ENCODE measurements at regions of chr1 and their contacts with region 1.

Region 1: GRCh38 chr1:22025368-22026155 is 24.1 kb downstream of the CELA3A start:
- DNase-seq: peak; percentile 80 to 94 (median 88)
- H3K4me3 ChIP-seq: peak overlapping the region; percentile 96
- H3K4me3 Mint-ChIP-seq: peak overlapping the region; percentile 86 to 98 (median 93)
- H3K27ac ChIP-seq: peak overlapping the region; percentile 99
- H3K27ac Mint-ChIP-seq: peak overlapping the region; percentile 93 to 100 (median 98)
- H3K4me1 ChIP-seq: peaks cover 31% of the 10 kb centered on the region
- H3K4me1 Mint-ChIP-seq: peaks cover 31 to 51% (median 50%) of the 10 kb centered on the region in 3 donors
- H3K27me3 ChIP-seq: no peaks in the 10 kb centered on the region
- H3K27me3 Mint-ChIP-seq: no peaks in the 10 kb centered on the region

Region 2: GRCh38 chr1:21782868-21783678 is 242.5 kb before region 1 on chr1 and contains the start of gene USP48:
- CTCF ChIA-PET with region 1: interaction called, 3 read pairs
- POLR2A ChIA-PET with region 1: interaction called, 12 read pairs
- DNase-seq: peak; percentile 94 to 98 (median 97)
- H3K4me3 ChIP-seq: peak within 1 kb of the TSS; percentile 99
- H3K4me3 Mint-ChIP-seq: peak within 1 kb of the TSS; percentile 91 to 99 (median 98)
- H3K27ac ChIP-seq: peak within 1 kb of the TSS; percentile 100
- H3K27ac Mint-ChIP-seq: peak within 1 kb of the TSS; percentile 100
- H3K4me1 ChIP-seq: peaks cover 27% of the 10 kb centered on the region
- H3K4me1 Mint-ChIP-seq: peaks cover 25 to 41% (median 36%) of the 10 kb centered on the region in 3 donors
- H3K27me3 ChIP-seq: no peaks in the 10 kb centered on the region
- H3K27me3 Mint-ChIP-seq: peaks cover 0 to 7% of the 10 kb centered on the region in 2 donors
- total RNA-seq, gene USP48: 60.6 to 61.5 TPM

Region 3: DNA sequence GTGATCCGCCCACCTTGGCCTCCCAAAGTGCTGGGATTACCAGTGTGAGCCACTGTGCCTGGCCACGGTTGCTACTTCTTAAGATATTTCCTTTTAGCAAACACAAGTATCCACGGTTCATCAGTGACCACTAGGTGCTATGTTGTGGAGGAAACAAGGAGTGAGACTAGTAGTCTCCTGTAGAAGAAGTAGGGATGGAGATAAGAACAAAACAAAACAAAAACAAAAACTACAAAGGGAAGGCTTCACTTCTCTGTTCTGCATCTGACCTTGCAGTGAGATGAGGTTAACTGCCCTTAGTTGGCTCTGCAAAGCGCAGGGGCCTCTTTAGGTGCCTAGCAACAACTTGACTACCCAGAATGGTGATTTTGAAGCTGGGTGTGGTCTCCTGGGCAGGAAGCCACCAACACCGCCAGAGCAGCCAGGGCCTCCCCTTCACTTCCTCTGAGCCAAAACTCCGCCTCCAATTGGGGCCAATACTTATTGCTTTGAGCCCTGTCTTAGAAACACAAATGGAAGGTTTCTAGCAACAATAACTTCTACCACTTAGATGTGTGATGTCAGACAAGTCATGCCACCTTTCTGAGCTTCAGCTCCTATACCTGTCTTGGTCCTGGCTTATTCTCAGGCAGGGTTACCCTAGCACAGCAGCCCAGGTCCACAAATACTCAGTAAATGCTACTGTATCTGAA is 14.2 kb after region 1 on chr1:
- CTCF ChIA-PET with region 1: interaction called, 58 read pairs
- POLR2A ChIA-PET with region 1: interaction called, 74 read pairs
- DNase-seq: peak; percentile 81 to 97 (median 96)
- H3K4me3 ChIP-seq: peak overlapping the region; percentile 30
- H3K4me3 Mint-ChIP-seq: peak overlapping the region; percentile 63 to 85 (median 81)
- H3K27ac ChIP-seq: peak overlapping the region; percentile 84
- H3K27ac Mint-ChIP-seq: peak overlapping the region; percentile 97 to 99 (median 99)
- H3K4me1 ChIP-seq: peaks cover 67% of the 10 kb centered on the region
- H3K4me1 Mint-ChIP-seq: peaks cover 43 to 57% (median 54%) of the 10 kb centered on the region in 3 donors
- H3K27me3 ChIP-seq: no peaks in the 10 kb centered on the region
- H3K27me3 Mint-ChIP-seq: no peaks in the 10 kb centered on the region

Region 4: DNA sequence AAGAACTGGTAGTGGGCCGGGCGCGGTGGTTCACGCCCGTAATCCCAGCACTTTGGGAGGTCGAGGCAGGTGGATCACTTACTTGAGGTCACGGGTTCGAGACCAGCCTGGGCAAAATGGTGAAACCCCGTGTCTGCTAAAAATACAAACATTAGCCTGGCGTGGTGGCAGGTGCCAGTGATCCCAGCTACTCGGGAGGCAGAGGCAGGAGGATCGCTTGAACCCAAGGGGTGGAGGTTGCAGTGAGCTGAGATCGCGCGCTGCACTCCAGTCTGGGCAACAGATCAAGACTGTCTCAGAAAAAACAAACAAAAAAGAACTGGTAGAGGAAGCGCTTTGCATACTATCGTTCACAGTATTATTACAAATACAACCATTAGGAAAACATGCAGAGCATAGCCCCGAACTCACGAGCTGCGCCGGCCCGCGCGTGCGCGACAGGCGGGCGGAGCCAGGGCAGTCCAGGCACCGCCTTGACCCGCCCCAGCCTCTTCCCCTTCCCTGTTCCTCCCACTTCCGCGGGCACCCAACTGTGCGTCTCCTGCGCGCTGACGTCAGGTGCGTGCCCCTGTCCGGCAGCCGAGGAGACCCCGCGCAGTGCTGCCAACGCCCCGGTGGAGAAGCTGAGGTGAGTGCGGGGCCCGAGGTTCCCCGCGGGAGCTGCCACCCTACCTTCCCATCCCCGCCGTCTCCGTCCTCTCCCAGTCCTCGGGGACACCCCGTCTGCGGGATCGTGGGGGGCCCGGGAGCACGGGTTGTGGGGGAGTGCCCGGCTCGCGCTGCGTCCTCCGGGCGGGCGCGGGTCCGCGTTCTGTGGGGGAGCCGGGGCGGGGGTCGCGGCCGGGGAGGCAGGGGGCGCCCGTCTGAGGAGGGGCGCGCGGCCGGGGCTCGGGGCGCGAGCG is 26.8 kb after region 1 on chr1 and contains the start of gene CDC42:
- CTCF ChIA-PET with region 1: interaction called, 77 read pairs
- POLR2A ChIA-PET with region 1: interaction called, 139 read pairs
- DNase-seq: peak; percentile 94 to 98 (median 97)
- H3K4me3 ChIP-seq: peak within 1 kb of the TSS; percentile 83
- H3K4me3 Mint-ChIP-seq: peak within 1 kb of the TSS; percentile 98 to 100 (median 100)
- H3K27ac ChIP-seq: peak within 1 kb of the TSS; percentile 87
- H3K27ac Mint-ChIP-seq: peak within 1 kb of the TSS; percentile 99 to 100 (median 100)
- H3K4me1 ChIP-seq: peaks cover 50% of the 10 kb centered on the region
- H3K4me1 Mint-ChIP-seq: peaks cover 51 to 68% (median 66%) of the 10 kb centered on the region in 3 donors
- H3K27me3 ChIP-seq: no peaks in the 10 kb centered on the region
- H3K27me3 Mint-ChIP-seq: peaks cover 0 to 2% of the 10 kb centered on the region in 2 donors
- total RNA-seq, gene CDC42: 317 to 347 TPM

Region 5: DNA sequence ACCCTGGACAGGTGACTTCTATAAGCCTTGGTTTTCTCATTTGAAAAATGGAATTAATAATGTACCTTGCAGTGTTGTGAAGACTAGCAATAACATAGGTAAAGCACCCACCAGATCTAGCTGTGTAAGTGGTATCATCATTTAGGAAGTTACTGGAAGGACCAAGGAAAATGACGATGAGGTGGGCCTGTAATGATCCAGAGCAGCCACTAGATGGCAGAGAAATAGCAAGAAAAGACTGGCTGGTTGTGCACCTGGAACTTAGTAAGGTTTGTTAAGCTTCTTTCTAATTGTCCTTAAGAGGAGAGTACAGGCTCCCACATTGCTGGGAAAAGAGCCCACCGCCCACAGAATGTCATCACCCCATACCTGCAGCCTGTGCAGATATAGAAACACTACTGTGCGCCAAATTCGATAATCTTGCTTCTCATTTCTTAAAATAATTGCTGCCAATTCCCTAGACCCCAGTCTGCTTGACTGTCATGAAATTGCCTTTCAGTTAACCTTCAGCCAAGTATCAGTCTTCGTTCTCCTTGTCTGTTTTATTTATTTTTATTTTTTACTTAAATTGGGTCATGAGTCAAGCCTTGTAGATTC is 80.1 kb after region 1 on chr1:
- CTCF ChIA-PET with region 1: interaction called, 11 read pairs
- POLR2A ChIA-PET with region 1: interaction called, 5 read pairs
- DNase-seq: peak in 2 of 5 donors; percentile 39 to 53
- H3K4me3 ChIP-seq: no peak overlapping the region
- H3K4me3 Mint-ChIP-seq: peak overlapping the region in 5 of 7 donors; percentile 30 to 66 (median 56)
- H3K27ac ChIP-seq: no peak overlapping the region
- H3K27ac Mint-ChIP-seq: peak overlapping the region in 7 of 8 donors; percentile 80 to 94 (median 87)
- H3K4me1 ChIP-seq: peaks cover 42% of the 10 kb centered on the region
- H3K4me1 Mint-ChIP-seq: peaks cover 64 to 84% (median 81%) of the 10 kb centered on the region in 3 donors
- H3K27me3 ChIP-seq: no peaks in the 10 kb centered on the region
- H3K27me3 Mint-ChIP-seq: no peaks in the 10 kb centered on the region

Measured in CD8-positive, alpha-beta memory T cell (primary cell).